HepG2 (cell line): ENCODE measurements at regions of chr16 and their contacts with region 1.

Region 1: DNA sequence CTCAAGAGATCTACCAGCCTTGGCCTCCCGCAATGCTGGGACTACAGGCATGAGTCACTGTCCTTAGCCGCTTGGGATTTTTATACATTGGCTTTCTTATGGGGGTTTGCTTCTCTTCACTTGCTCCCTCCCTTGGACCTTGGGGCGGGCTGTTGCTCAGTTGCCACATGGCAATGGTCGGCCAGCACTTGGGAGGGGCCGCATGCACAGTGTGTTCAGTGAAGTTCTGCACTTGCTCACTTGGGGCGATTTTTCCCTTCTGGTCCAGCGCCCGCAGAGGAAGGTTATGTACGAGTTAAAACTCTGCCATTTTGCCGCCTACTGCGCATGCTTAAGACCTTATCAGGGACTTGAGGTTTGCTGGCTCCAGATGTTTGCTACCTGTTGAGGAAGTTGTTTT is 1367.6 kb upstream of the CDH8 start:
- DNase-seq: no peak
- ATAC-seq: no peak
- H3K4me3 ChIP-seq: no peak overlapping the region
- H3K27ac ChIP-seq: no peak overlapping the region
- H3K4me1 ChIP-seq: no peaks in the 10 kb centered on the region
- H3K27me3 ChIP-seq: no peaks in the 10 kb centered on the region
- CTCF ChIP-seq: no peak
- EP300 ChIP-seq: no peak
- POLR2A ChIP-seq: no peak
- RAD21 ChIP-seq: no peak

Region 2: GRCh38 chr16:61564716-61565115 is 1839.1 kb before region 1 on chr16:
- CTCF ChIA-PET with region 1: no interaction called
- POLR2A ChIA-PET with region 1: no interaction called
- in situ Hi-C with region 1: no loop called
- intact Hi-C with region 1: loop called (anchors 5 kb)
- DNase-seq: no peak
- ATAC-seq: no peak
- H3K4me3 ChIP-seq: no peak overlapping the region
- H3K27ac ChIP-seq: no peak overlapping the region
- H3K4me1 ChIP-seq: no peaks in the 10 kb centered on the region
- H3K27me3 ChIP-seq: no peaks in the 10 kb centered on the region
- CTCF ChIP-seq: no peak
- EP300 ChIP-seq: no peak
- POLR2A ChIP-seq: no peak
- RAD21 ChIP-seq: no peak

Region 3: GRCh38 chr16:62665269-62665668 is 738.5 kb before region 1 on chr16:
- CTCF ChIA-PET with region 1: no interaction called
- POLR2A ChIA-PET with region 1: no interaction called
- in situ Hi-C with region 1: no loop called
- intact Hi-C with region 1: no loop called
- DNase-seq: no peak
- ATAC-seq: no peak
- H3K4me3 ChIP-seq: no peak overlapping the region
- H3K27ac ChIP-seq: no peak overlapping the region
- H3K4me1 ChIP-seq: no peaks in the 10 kb centered on the region
- H3K27me3 ChIP-seq: no peaks in the 10 kb centered on the region
- CTCF ChIP-seq: no peak
- EP300 ChIP-seq: no peak
- POLR2A ChIP-seq: no peak
- RAD21 ChIP-seq: no peak

Region 4: DNA sequence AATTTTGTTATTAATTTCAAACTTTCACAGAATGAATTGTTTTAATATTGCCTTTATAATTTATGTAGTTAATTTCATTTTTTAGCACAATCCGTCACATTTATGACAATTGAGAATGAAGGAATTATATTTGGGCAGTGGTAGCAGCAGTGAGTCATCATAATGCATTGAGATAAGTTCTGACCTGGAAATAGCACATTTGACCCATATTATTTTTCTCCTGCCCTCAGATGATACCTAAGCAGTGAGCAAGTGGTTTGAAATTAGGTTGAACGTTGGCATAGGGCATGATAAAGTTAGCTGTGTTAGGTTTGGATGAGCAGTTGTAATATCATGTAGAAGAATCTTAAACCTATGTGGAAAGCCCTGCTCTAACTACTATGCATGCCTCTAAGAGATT is 63.7 kb after region 1 on chr16:
- CTCF ChIA-PET with region 1: no interaction called
- POLR2A ChIA-PET with region 1: no interaction called
- in situ Hi-C with region 1: no loop called
- intact Hi-C with region 1: no loop called
- DNase-seq: no peak
- ATAC-seq: no peak
- H3K4me3 ChIP-seq: no peak overlapping the region
- H3K27ac ChIP-seq: no peak overlapping the region
- H3K4me1 ChIP-seq: no peaks in the 10 kb centered on the region
- H3K27me3 ChIP-seq: no peaks in the 10 kb centered on the region
- CTCF ChIP-seq: no peak
- EP300 ChIP-seq: no peak
- POLR2A ChIP-seq: no peak
- RAD21 ChIP-seq: no peak